ENCODE measurements at regions of chr12 and their contacts with region 1.

Region 1: GRCh38 chr12:66269757-66270383 is 32.4 kb upstream of the HELB start:
- H3K4me3 Mint-ChIP-seq: no peak overlapping the region
- H3K27ac Mint-ChIP-seq: no peak overlapping the region
- H3K4me1 Mint-ChIP-seq: no peaks in the 10 kb centered on the region
- H3K27me3 Mint-ChIP-seq: no peaks in the 10 kb centered on the region

Region 2: GRCh38 chr12:66235626-66236281 is 34.1 kb before region 1 on chr12:
- intact Hi-C with region 1: loop called (anchors 2 kb)
- H3K4me3 Mint-ChIP-seq: peak overlapping the region; percentile 72
- H3K27ac Mint-ChIP-seq: peak overlapping the region; percentile 85
- H3K4me1 Mint-ChIP-seq: peaks cover 66% of the 10 kb centered on the region
- H3K27me3 Mint-ChIP-seq: no peaks in the 10 kb centered on the region

Region 3: DNA sequence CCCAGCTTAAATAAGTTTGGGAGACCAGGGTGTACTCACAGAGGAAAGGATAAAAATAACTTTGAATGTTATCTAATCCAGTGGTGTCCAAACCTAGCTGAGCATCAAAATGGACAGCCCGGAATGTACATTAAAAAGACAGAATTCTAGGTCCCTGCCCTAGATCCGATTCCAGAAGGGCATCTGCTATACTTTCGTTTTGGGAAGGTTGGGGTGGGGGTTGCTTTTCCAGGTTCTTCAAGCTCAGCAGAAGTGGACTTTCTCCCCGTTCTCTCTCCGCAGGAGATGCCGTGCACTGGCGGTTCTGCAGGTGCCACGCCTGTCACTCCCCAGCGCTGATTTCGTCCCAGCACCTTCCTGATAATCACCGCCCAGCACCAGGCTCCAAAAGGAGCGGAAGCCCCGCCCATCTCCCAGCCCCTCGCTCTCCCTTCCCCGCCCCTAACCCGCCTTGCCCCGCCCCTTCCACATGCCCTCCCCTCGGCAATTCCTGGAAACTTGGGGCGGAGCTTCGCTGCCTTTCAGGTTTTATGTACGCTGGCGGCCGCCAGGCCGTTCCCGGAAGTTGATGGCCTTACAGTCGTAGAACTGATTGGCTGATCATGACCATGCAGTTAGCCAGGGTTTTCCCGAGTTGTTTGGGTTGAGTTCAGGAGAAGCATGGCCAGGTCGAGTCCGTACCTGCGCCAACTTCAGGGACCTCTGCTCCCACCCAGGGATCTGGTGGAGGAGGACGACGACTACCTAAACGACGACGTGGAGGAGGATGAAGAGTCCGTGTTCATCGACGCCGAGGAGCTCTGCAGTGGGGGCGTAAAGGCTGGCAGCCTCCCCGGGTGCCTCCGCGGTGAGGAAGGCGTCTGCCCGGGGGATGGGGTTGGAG is 32.3 kb after region 1 on chr12 and contains the start of gene HELB:
- intact Hi-C with region 1: loop called (anchors 5 kb)
- H3K4me3 Mint-ChIP-seq: peak within 1 kb of the TSS; percentile 97
- H3K27ac Mint-ChIP-seq: peak within 1 kb of the TSS; percentile 93
- H3K4me1 Mint-ChIP-seq: peaks cover 29% of the 10 kb centered on the region
- H3K27me3 Mint-ChIP-seq: no peaks in the 10 kb centered on the region

Region 4: DNA sequence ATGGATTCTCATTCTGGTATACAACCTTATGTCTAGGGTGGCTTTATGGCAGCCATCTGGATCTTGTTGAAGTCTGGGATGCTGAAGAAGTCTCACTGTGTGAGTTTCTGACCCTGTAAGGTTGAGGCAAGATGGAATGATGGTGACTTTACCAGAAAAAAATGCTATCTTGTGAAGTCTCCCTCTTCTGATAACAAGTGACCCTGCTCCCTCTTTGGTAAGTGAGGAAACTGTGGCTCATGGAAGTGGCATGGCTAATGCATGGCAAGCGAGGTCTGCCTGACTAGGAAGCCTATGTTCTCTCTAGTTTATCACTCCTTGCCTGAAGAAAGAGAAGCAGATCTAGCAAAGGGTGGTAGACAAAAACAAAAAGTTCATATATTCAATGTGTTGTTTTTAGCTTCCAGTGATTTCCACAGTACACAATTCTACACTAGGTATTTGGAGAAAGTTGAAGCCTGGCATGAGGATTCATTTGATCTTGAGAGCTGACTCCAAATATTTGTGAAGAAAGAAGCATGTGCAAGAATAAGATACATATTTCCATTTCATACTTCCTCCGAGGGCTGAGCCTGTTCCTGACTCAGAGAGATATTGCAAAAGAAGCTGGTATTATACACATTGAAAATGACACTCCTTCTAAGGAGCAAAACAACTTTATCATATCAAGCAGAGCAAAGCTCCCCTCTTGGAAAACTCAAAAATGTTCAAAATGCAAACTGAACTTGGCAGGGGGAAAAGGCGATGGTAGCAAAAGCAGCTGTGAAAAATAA is 96.0 kb after region 1 on chr12:
- intact Hi-C with region 1: no loop called
- H3K4me3 Mint-ChIP-seq: no peak overlapping the region
- H3K27ac Mint-ChIP-seq: no peak overlapping the region
- H3K4me1 Mint-ChIP-seq: peaks cover 25% of the 10 kb centered on the region
- H3K27me3 Mint-ChIP-seq: no peaks in the 10 kb centered on the region

Region 5: DNA sequence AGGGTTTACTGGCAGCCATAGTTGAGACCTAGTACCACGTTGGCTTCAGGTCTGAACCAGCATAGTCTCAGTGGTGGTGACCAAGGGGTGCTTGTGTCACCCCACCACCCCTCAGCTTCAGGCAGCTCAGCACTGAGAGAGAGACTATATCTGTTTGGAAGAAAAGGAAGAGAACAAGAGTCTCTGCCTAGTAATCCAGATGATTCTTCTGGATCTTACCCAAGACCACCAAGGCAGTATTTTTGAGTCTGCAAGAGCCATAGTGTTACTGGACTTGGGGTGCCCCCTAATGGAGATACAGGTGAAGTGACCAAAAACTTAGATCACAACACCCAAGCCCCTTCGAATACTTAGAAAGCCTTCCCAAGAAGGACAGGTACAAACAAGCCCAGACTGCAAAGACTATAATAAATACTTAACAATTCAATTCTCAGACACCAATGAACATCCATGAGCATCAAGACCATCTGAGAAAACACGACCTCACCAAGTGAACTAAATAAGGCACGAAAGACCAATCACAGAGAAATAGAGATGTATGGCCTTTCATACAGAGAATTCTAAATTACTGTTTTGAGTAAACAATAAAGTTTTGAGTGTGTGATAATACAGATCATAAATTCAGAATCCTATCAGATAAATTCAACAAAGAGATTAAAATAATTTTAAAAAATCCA is 139.5 kb after region 1 on chr12:
- intact Hi-C with region 1: loop called (anchors 2 kb)
- H3K4me3 Mint-ChIP-seq: no peak overlapping the region
- H3K27ac Mint-ChIP-seq: peak overlapping the region; percentile 35
- H3K4me1 Mint-ChIP-seq: peaks cover 26% of the 10 kb centered on the region
- H3K27me3 Mint-ChIP-seq: no peaks in the 10 kb centered on the region

Region 6: DNA sequence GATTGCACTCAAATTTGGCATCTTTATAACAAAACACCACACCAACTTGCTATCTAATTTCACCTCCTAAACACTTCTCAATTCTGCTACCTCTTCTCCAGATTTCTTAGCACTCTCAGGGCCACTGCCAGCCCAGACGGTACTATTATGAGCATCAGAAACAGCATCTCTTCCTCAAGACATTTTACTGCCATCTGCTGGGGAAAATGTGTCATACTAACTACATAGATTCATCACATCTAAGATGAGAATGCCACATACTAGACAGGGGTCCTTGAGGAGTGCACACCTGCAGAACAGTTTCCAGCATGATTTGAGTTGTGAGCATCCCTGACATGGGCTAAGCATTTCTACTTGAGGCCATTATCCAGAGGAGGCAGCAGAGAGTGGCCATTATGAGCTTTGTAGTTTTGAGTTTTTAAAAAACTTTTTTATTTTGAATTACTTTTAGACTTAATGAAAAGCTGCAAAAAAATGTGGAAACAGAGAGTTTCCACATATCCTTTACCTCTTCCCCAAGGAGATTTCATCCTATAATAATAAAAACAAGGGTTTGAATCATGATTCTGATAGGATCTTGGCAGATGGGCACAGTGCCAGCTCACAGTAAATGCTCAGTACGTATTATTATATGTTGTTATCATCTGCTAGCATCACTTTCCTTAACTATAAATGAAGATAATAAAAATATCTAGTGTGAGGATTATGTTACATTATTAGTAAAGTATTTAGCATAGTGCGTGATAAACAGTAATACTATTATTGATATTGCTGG is 424.2 kb after region 1 on chr12:
- intact Hi-C with region 1: loop called (anchors 10 kb)
- H3K4me3 Mint-ChIP-seq: no peak overlapping the region
- H3K27ac Mint-ChIP-seq: no peak overlapping the region
- H3K4me1 Mint-ChIP-seq: peaks cover 20% of the 10 kb centered on the region
- H3K27me3 Mint-ChIP-seq: no peaks in the 10 kb centered on the region

Measured in dendritic cell treated with granulocyte-macrophage colony-stimulating factor and Interleukin-4, amounts not matched to agents 40 ng/mL and 50 ng/mL, for 4 days (primary cell).